BJ (cell line): ENCODE measurements at regions of chr2 and their contacts with region 1.

Region 1: DNA sequence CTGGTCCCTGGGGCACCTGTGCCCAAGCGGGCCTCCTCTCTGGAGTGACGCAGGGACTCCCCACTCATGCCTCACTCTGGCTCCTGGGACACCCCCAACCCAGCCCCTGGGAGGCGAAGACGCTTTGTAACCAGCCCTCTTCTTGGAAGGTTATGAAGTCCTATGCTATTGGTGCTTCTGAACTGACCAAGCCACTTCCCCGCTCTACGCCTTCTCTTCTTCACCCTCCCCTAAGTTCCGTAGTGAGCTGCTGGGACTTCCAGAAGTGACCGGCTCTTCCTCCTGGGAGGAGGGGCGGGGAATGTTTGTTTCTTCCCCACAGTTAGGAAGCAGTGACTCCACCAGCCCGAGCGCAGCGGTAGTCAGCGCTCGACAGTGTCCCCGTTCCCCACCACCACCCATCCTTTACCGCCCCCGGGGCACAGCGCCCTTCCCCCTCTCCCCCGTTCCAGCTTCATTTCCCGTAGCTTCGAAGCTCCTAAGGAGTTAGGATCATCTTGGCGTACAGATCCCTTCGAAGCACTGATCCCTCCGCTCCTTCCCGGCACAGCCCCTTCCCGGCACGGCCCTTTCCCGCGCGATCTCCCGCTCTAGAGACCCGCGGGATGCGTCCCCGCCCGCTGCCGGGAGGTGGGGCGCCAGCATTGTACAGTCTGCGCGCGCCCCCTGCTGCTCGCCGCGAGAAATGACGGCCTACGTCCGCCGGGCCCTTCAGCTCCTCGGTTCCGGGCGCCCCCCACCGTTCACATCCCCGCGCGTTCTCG is 25.3 kb upstream of the NOTO start:
- DNase-seq: no peak
- H3K4me3 ChIP-seq: peak overlapping the region; percentile 78
- H3K27me3 ChIP-seq: peaks cover 12% of the 10 kb centered on the region
- CTCF ChIP-seq: peak; percentile 99

Region 2: DNA sequence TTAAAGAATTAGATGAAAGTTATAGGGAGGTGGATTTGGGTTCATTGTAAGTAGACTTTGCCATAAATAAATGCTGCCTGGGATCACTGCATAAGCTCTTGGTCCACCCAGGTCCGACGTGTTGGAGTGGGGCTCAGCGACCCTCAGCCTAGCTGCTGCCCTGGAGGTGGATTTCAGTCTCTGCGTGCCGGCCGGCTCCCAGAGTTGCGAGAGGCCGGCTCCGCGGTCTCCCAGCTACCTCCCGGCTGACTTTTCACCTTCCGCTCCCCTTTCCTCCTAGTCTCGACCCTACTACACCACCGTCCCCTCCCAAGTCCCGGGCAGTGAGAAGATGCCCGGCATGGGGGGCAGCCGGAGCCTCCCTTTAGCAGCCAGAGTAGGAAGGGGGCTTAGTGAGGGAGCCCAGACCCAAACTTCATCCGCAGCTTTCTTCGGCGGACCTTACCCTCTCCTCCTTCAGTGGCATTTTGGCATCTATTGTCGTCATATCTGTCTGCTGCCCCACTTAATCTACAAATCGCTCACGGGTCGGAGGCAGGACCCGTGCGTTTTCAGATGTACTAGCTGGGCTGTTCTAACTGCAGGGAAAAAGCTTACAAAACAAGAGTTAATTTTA is 251.6 kb before region 1 on chr2:
- CTCF ChIA-PET with region 1: interaction called, 11 read pairs
- POLR2A ChIA-PET with region 1: no interaction called
- DNase-seq: no peak
- H3K4me3 ChIP-seq: no peak overlapping the region
- H3K27me3 ChIP-seq: peaks cover 81% of the 10 kb centered on the region
- CTCF ChIP-seq: no peak

Region 3: GRCh38 chr2:72993147-72993932 is 183.7 kb before region 1 on chr2:
- CTCF ChIA-PET with region 1: interaction called, 17 read pairs
- POLR2A ChIA-PET with region 1: no interaction called
- DNase-seq: no peak
- H3K4me3 ChIP-seq: no peak overlapping the region
- H3K27me3 ChIP-seq: no peaks in the 10 kb centered on the region
- CTCF ChIP-seq: peak; percentile 71

Region 4: DNA sequence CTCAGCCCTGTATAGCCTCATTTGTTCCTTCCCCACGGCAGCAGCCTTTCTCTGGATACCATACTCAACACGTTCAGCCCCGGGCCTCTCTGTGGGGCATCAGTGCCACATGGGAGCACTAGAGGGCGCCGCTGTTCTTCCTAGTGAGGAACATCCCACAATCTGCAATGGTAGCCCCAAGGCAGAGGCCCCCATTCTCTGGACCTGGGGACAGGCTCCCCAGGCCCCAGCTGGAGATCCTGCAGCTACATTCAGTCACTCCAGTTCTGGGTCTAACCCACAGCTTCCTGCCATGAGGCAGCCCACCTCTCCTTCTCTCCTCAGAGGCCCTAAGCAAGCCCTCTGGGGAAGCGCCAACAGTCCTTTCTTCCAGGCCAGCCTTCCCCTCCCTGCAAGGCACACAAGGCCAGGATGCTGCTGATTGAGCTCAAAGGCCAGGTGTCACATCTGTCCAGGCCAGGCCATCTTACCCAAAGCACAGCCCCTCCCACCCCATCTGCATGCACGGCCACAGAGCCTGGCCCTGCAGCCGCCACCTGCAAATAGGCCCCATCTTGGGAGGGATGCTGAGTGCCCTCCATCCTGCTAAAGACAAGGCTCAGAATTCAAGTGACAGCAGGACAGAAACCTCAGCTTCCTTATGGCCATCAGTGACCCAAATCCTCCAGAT is 91.2 kb before region 1 on chr2:
- CTCF ChIA-PET with region 1: interaction called, 31 read pairs
- POLR2A ChIA-PET with region 1: no interaction called
- DNase-seq: no peak
- H3K4me3 ChIP-seq: no peak overlapping the region
- H3K27me3 ChIP-seq: no peaks in the 10 kb centered on the region
- CTCF ChIP-seq: peak; percentile 98

Region 5: GRCh38 chr2:73163483-73164367 is 13.3 kb before region 1 on chr2:
- CTCF ChIA-PET with region 1: interaction called, 15 read pairs
- POLR2A ChIA-PET with region 1: no interaction called
- DNase-seq: no peak
- H3K4me3 ChIP-seq: no peak overlapping the region
- H3K27me3 ChIP-seq: peaks cover 6% of the 10 kb centered on the region
- CTCF ChIP-seq: peak; percentile 85

Region 6: DNA sequence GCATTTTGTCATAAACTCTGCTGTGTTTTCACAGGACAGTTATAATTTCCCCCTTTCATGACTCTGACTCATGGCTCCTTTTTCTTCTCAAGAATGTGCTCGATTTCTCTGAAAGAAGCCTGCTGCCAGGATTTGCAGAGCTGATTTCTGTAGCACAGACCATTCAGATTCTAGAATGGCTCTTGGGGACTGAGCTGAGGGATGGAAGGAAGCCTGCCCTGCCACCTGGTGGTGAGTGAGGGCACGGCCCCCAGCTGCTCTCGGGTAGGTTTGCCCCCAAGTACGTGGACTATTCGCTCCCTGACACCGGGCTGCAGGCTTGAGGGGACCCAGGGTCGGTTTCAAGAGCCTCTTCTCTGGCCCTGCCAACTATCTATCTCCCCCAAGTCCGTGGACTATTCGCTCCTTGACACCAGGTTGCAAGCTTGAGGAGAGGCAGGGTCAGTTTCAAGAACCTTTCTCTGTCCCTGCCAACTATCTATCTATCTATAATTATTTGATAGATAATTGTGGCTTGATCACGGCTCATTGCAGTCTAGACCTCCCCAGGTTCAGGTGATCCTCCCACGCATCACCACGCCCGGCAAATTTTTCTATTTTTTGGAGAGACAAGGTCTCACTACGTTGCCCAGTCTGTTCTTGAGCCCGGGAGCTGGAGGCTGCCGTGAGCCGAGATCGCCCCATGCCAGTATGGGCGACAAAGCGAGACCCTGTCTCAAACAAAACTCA is 35.5 kb after region 1 on chr2:
- CTCF ChIA-PET with region 1: interaction called, 30 read pairs
- POLR2A ChIA-PET with region 1: no interaction called
- DNase-seq: peak; percentile 35
- H3K4me3 ChIP-seq: no peak overlapping the region
- H3K27me3 ChIP-seq: peaks cover 5% of the 10 kb centered on the region; the same call in 1 of the 2 replicates
- CTCF ChIP-seq: peak; percentile 98